ENCODE measurements at regions of chr12 and their contacts with region 1.

Region 1: DNA sequence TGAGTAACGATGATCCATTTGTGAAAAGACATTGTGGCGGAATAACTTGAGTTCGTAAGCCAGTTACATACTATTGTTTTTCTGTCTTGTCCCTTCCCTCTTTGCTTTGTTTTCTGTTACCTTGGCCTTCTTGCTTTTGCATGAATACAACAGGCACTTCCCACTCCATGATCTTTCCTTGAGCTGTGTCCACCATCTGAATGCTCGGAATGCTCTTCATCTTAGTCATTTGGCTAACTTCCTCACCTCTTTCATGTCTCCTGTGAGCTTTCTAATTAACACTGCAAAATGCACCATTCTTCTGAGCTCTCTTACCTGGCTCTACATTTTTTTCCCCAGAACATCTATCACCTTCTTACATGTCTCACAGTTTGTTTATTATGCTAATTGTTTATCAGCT is 10.0 kb downstream of the KNTC1 start:
- DNase-seq: no peak
- H3K4me3 ChIP-seq: no peak overlapping the region
- CTCF ChIP-seq: no peak

Region 2: DNA sequence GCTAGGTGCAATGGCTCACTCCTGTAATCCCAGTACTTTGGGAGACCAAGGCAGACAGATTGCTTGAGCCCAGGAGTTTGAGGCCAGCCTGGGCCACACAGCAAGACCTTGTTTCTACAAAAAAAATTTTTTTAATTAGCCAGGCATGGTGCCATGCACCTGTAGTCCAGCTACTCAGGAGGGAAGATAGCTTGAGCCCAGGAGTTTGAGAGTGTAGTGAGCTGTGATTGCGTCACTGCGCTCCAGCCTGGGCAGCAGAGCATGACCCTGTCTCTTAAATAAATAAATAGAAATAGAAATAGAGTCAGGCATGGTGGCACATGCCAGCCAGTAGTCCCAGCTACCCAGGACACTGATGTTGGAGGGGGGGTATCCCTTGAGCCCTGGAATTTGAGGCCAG is 77.8 kb before region 1 on chr12:
- in situ Hi-C with region 1: no loop called
- DNase-seq: no peak
- H3K4me3 ChIP-seq: no peak overlapping the region
- CTCF ChIP-seq: no peak

Region 3: GRCh38 chr12:122593910-122594309 is 56.9 kb after region 1 on chr12:
- in situ Hi-C with region 1: loop called (anchors 5 kb)
- DNase-seq: no peak
- H3K4me3 ChIP-seq: no peak overlapping the region
- CTCF ChIP-seq: no peak

Region 4: DNA sequence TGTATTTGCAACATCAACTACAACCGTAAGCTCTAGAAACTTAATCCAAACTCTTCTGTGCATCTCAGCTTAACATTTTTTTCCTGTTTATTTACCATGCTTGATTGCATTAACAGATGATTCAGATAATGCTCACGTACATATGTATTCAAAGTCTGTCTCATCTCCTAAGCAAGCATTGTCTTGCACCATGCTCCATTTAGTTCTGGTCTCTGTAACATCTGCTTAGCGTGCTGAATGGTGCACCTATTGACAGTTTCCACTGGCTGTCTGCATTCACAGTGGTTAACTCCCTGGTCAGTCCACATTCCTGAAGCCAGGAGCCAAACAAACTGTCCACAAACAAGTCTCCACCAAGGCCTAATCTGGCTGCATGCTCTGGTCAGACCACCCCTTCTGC is 73.9 kb after region 1 on chr12:
- in situ Hi-C with region 1: no loop called
- DNase-seq: peak; percentile 27
- H3K4me3 ChIP-seq: no peak overlapping the region
- CTCF ChIP-seq: no peak